ENCODE measurements at regions of chr6 and their contacts with region 1.

Region 1: DNA sequence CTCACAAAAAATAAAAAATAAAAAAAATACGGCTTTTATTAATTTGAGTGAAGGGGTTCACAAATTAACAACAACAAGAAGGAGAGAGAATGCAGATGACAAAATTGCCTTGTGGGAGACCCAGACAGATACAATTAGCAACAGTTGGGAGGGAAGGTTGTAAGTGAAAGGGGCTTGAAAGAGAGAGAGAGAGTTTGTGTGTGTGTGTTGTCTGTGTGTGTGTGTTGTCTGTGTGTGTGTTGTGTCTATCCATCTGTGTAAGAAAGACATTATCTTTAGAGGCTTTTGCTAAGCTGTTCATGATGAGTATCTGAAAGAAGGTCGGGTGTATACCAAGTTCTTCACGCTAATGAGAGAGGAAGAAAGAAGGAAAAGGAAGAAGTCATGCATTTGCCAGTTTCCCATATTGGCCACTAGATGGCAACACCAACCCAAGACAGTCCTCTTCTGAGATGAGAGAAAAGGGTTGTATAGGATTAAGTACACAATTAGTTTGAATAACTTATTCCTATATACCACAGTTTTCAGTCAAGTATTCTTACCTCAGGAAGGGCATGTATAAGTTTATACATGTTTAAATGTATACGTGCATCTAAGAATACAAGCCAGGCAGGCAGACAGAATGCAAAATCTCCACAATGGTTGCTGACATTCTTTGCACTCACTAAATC is 63.7 kb upstream of the CD2AP start:
- DNase-seq: no peak
- H3K4me3 ChIP-seq: no peak overlapping the region
- H3K27ac ChIP-seq: no peak overlapping the region
- H3K4me1 ChIP-seq: no peaks in the 10 kb centered on the region
- H3K27me3 ChIP-seq: peaks cover 0 to 1% (median 0%) of the 10 kb centered on the region in 4 experiments; a peak in 1 of 7 replicates
- CTCF ChIP-seq: peak in 2 of 3 experiments; percentile 62 to 92; a peak in 3 of 4 replicates
- EP300 ChIP-seq: no peak
- POLR2A ChIP-seq: no peak
- RAD21 ChIP-seq: peak; percentile 92 to 93

Region 2: GRCh38 chr6:47392251-47392650 is 21.6 kb before region 1 on chr6:
- CTCF ChIA-PET with region 1: interaction called, 10 read pairs
- POLR2A ChIA-PET with region 1: interaction called, 3 read pairs
- DNase-seq: no peak
- H3K4me3 ChIP-seq: no peak overlapping the region
- H3K27ac ChIP-seq: no peak overlapping the region
- H3K4me1 ChIP-seq: peaks cover 0 to 2% (median 0%) of the 10 kb centered on the region in 4 experiments; a peak in 2 of 7 replicates
- H3K27me3 ChIP-seq: no peaks in the 10 kb centered on the region
- CTCF ChIP-seq: no peak
- EP300 ChIP-seq: no peak
- POLR2A ChIP-seq: no peak
- RAD21 ChIP-seq: no peak

Region 3: DNA sequence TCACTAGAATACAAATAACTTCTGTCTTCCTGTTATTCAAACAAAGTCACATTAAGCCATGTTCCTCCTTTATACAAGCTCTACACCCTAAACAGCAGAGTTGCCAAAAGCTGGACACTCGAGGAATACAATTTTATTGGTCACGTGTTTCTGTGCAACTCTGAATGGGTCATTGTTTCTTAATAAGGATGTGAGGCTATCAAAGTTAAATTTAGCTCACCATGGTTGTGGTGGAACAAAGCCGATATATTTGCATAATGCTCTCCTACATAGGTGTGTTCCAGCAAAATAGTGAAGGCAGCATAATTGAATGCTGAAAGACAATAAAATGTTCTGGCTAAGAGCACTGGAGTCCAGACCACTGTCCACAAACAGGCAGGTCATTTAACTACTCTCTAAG is 26.8 kb after region 1 on chr6:
- CTCF ChIA-PET with region 1: no interaction called
- POLR2A ChIA-PET with region 1: no interaction called
- DNase-seq: no peak
- H3K4me3 ChIP-seq: no peak overlapping the region
- H3K27ac ChIP-seq: no peak overlapping the region
- H3K4me1 ChIP-seq: no peaks in the 10 kb centered on the region
- H3K27me3 ChIP-seq: no peaks in the 10 kb centered on the region
- CTCF ChIP-seq: no peak
- EP300 ChIP-seq: no peak
- POLR2A ChIP-seq: no peak
- RAD21 ChIP-seq: no peak

Region 4: GRCh38 chr6:47603995-47604394 is 190.1 kb after region 1 on chr6:
- CTCF ChIA-PET with region 1: interaction called, 14 read pairs
- POLR2A ChIA-PET with region 1: no interaction called
- DNase-seq: no peak
- H3K4me3 ChIP-seq: no peak overlapping the region
- H3K27ac ChIP-seq: no peak overlapping the region
- H3K4me1 ChIP-seq: no peaks in the 10 kb centered on the region
- H3K27me3 ChIP-seq: no peaks in the 10 kb centered on the region
- CTCF ChIP-seq: no peak
- EP300 ChIP-seq: no peak
- POLR2A ChIP-seq: no peak
- RAD21 ChIP-seq: no peak

Measured in H1 (cell line).